ENCODE measurements at regions of chr9 and their contacts with region 1.

Region 1: GRCh38 chr9:130208600-130209347 is 36.6 kb downstream of the NCS1 start:
- DNase-seq: no peak
- ATAC-seq: no peak
- H3K4me3 ChIP-seq: no peak overlapping the region
- H3K27ac ChIP-seq: no peak overlapping the region
- H3K4me1 ChIP-seq: no peaks in the 10 kb centered on the region
- CTCF ChIP-seq: no peak
- EP300 ChIP-seq: no peak
- POLR2A ChIP-seq: no peak
- RAD21 ChIP-seq: no peak

Region 2: GRCh38 chr9:130226112-130226681 is 17.4 kb after region 1 on chr9:
- CTCF ChIA-PET with region 1: interaction called, 10 read pairs
- POLR2A ChIA-PET with region 1: no interaction called
- DNase-seq: no peak
- ATAC-seq: no peak; a peak in 1 of 6 replicates
- H3K4me3 ChIP-seq: no peak overlapping the region
- H3K27ac ChIP-seq: no peak overlapping the region
- H3K4me1 ChIP-seq: no peaks in the 10 kb centered on the region
- CTCF ChIP-seq: no peak
- EP300 ChIP-seq: no peak
- POLR2A ChIP-seq: no peak
- RAD21 ChIP-seq: no peak

Region 3: GRCh38 chr9:130283539-130284248 is 74.9 kb after region 1 on chr9:
- CTCF ChIA-PET with region 1: no interaction called
- POLR2A ChIA-PET with region 1: no interaction called
- DNase-seq: no peak
- ATAC-seq: no peak
- H3K4me3 ChIP-seq: no peak overlapping the region
- H3K27ac ChIP-seq: no peak overlapping the region
- H3K4me1 ChIP-seq: no peaks in the 10 kb centered on the region
- CTCF ChIP-seq: no peak
- EP300 ChIP-seq: no peak
- POLR2A ChIP-seq: no peak
- RAD21 ChIP-seq: no peak

Measured in A549 (cell line).